Mammary epithelial cell (primary cell): ENCODE measurements at regions of chr11 and their contacts with region 1.

Region 1: GRCh38 chr11:236774-237767 is at the start of gene PSMD13:
- DNase-seq: peak; percentile 73
- H3K4me3 ChIP-seq: peak within 1 kb of the TSS; percentile 87 to 98 (median 98)
- H3K27ac ChIP-seq: peak within 1 kb of the TSS; percentile 93
- H3K4me1 ChIP-seq: peaks cover 15% of the 10 kb centered on the region
- H3K27me3 ChIP-seq: no peaks in the 10 kb centered on the region
- CTCF ChIP-seq: no peak
- total RNA-seq, gene PSMD13: 89.5 to 133 TPM

Region 2: GRCh38 chr11:207208-207862 is 29.7 kb before region 1 on chr11 and contains the starts of genes BET1L and RIC8A:
- CTCF ChIA-PET with region 1: no interaction called
- dilution Hi-C with region 1: no loop called
- in situ Hi-C with region 1: no loop called
- intact Hi-C with region 1: loop called (anchors 1 kb)
- DNase-seq: peak; percentile 98
- H3K4me3 ChIP-seq: peak within 1 kb of the TSS; percentile 68 to 92 (median 74)
- H3K27ac ChIP-seq: peak within 1 kb of the TSS; percentile 90
- H3K4me1 ChIP-seq: peaks cover 22% of the 10 kb centered on the region
- H3K27me3 ChIP-seq: no peaks in the 10 kb centered on the region
- CTCF ChIP-seq: no peak
- total RNA-seq, gene BET1L: 13.5 to 53.8 TPM
- total RNA-seq, gene RIC8A: 112 to 132 TPM

Region 3: DNA sequence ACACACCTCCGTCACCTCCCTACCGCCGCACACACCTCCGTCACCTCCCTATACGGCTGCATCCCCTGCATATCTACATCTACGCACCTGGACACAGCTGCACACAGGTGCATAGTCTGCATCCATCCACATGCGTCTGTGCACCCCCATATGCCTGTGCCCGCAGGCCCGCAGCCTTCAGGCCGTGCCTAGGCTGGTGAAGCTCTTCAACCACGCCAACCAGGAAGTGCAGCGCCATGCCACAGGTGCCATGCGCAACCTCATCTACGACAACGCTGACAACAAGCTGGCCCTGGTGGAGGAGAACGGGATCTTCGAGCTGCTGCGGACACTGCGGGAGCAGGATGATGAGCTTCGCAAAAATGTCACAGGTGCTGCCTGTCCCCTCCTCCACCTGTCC is 161.8 kb after region 1 on chr11:
- CTCF ChIA-PET with region 1: no interaction called
- dilution Hi-C with region 1: no loop called
- in situ Hi-C with region 1: no loop called
- intact Hi-C with region 1: no loop called
- DNase-seq: no peak
- H3K4me3 ChIP-seq: no peak overlapping the region
- H3K27ac ChIP-seq: no peak overlapping the region
- H3K4me1 ChIP-seq: peaks cover 21% of the 10 kb centered on the region
- H3K27me3 ChIP-seq: no peaks in the 10 kb centered on the region
- CTCF ChIP-seq: no peak

Region 4: DNA sequence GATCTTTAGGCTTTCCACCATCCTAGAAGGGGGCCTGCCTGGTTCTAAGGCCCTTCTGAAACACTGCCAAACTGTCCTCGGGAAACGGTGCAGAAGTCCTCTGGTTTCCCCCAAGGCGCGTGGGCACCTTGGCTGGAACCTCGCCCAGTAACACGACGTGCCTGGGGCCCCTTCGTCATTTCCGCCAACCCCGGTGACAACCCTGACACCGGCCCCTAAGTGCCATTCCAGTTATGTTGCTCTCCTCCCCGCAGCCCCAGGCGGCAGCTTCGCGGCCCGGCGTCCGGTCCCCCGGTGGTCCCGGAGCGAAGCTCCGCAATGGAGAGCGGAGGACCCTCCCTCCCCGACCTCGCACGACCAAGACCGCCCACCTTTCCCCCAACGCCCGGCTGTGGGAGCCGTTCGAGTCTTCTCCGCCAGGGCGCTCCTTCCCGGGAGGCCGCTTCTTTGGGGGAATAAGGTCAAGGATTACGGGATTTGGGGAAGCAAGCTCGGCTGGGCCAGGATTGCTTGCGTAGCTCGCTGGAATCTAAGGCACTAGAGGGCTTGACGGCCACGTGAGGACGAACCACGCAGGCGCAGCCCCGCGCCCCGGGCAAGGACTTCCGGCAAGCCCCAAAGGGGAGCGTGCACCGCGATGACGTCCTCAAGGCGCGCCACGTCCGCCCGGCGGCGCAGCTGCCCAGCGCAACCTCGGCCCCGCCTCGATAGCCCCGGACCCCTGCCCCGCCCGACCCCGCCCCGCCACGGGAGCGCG is 269.3 kb after region 1 on chr11:
- CTCF ChIA-PET with region 1: no interaction called
- dilution Hi-C with region 1: no loop called
- in situ Hi-C with region 1: no loop called
- intact Hi-C with region 1: loop called (anchors 5 kb)
- DNase-seq: peak; percentile 96
- H3K4me3 ChIP-seq: peak overlapping the region; percentile 84 to 96 (median 92)
- H3K27ac ChIP-seq: peak overlapping the region; percentile 97
- H3K4me1 ChIP-seq: peaks cover 35% of the 10 kb centered on the region
- H3K27me3 ChIP-seq: no peaks in the 10 kb centered on the region
- CTCF ChIP-seq: no peak